Tibial artery (tissue), 4 donors: ENCODE measurements at regions of chr6 and their contacts with region 1.

Region 1: DNA sequence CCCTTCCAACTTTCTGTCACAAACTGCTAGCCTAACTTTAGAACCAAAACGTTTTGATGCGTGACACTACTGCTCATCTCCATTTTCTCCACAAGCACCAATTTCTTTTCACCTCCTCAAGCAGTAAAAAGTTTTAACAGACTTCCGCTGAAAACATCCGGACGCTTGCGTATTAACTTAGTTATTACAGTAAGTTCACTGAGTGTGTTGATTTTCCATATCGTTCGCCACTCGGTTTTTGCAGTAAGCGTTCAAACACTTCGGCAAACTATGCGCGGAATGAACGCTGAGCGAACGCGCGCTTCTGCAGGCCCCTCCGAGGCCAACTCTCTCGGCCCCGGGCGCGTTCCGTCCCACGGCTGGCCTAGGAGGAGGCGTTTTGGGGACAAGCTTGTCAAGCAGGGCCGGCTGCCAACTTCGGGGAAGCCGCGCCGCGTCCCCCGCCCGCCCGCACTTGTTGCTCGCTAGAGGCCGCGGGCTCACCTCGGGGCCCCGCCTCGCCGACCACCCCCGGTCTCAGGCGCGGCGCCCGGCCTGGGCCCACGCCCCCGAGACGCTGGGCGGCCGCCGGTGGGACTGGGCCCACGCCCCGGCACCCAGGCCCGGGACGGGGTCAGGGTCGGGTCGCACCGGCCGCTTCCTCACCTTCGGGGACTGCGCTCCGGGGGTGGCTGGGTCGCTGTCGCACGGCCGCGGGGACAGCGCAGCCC is 945 bp downstream of the PHF10 start:
- DNase-seq: peak; percentile 69 to 89
- H3K4me3 ChIP-seq: peak overlapping the region; percentile 74 to 88
- H3K27ac ChIP-seq: peak overlapping the region; percentile 87 to 98
- H3K4me1 ChIP-seq: peaks cover 0 to 32% (median 13%) of the 10 kb centered on the region in 4 donors
- H3K27me3 ChIP-seq: no peaks in the 10 kb centered on the region
- CTCF ChIP-seq: peak in 1 of 2 experiments; percentile 6

Region 2: DNA sequence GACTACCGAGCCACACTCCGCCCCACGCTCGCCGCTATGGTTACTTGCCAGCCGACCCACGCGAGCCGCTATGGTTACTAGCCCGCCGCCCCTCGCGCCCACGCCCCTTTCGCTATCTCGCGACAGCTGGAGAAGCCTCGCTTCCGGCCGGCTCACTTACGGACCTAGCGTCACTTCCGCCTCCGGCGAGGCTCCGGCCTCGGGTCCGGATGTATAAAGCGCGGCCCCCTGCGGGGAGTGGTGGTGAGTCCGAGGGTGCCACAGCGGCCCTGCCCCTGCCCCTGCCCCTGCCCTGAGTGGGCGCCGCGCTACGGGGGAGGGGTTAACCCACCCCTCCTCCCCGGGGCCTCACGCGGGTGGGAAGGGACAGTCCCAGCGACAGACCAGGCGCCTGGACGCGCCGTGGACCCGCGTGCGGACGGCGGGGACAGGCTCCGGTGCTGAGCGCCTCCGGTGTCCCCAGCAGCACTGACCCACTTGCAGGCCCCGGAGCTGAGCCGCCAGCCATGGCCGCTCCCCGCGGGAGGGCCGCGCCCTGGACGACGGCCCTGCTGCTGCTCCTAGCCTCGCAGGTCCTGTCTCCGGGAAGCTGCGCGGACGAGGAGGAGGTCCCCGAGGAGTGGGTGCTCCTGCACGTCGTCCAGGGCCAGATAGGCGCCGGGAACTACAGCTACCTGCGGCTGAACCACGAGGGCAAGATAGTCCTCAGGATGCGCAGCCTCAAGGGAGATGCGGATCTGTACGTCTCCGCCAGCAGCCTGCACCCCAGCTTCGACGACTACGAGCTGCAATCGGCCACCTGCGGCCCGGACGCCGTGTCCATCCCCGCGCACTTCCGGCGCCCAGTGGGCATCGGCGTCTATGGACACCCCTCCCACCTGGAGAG is 21.2 kb before region 1 on chr6 and contains the starts of genes C6orf120 and WDR27:
- intact Hi-C with region 1: loop called (anchors 2 kb)
- DNase-seq: peak; percentile 96 to 97
- H3K4me3 ChIP-seq: peak within 1 kb of the TSS; percentile 77 to 85
- H3K27ac ChIP-seq: peak within 1 kb of the TSS; percentile 89 to 99
- H3K4me1 ChIP-seq: peaks cover 5 to 43% (median 32%) of the 10 kb centered on the region in 4 donors
- H3K27me3 ChIP-seq: no peaks in the 10 kb centered on the region
- CTCF ChIP-seq: no peak

Region 3: DNA sequence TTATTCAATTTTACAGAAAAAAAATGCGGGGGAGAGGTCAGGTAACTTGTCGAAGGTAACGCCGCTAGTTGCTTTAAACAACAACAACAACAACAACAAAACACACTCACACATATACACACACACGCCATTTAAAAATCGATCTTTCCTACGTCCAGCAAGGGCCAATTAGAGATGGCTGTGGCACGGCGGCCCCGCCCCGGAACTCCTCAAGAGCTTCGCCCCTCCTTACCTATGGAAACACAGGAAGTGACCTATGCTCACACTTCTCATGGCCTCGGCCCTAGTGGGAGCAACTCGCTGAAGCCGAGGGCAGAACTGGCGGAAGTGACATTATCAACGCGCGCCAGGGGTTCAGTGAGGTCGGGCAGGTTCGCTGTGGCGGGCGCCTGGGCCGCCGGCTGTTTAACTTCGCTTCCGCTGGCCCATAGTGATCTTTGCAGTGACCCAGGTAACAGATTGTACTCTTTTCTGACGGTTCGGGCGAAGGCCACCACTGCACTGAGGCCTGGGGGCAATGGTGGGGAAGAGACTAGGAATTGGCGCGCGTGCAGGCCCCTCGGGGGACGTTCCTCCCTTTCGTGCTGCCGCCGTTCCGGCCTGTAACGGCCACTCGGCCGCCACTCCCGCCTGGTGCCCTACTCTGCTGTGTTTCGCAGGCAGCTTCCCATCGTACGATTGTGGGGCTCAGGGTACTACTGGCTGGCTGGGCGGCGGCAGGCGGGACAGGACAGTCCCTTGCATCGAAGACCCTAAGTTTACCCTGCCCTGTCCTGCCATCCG is 830.8 kb after region 1 on chr6 and contains the start of gene TBP:
- intact Hi-C with region 1: loop called (anchors 10 kb)
- DNase-seq: peak; percentile 98 to 99
- H3K4me3 ChIP-seq: peak within 1 kb of the TSS; percentile 94 to 96
- H3K27ac ChIP-seq: peak within 1 kb of the TSS; percentile 91 to 96
- H3K4me1 ChIP-seq: peaks cover 0 to 48% (median 40%) of the 10 kb centered on the region in 4 donors
- H3K27me3 ChIP-seq: no peaks in the 10 kb centered on the region
- CTCF ChIP-seq: no peak